ENCODE measurements at regions of chr2 and their contacts with region 1.

Region 1: GRCh38 chr2:191155608-191156071 is 4.8 kb upstream of the STAT4 start:
- H3K4me3 Mint-ChIP-seq: no peak overlapping the region
- H3K27ac Mint-ChIP-seq: no peak overlapping the region
- H3K4me1 Mint-ChIP-seq: peaks cover 23% of the 10 kb centered on the region
- H3K27me3 Mint-ChIP-seq: no peaks in the 10 kb centered on the region

Region 2: DNA sequence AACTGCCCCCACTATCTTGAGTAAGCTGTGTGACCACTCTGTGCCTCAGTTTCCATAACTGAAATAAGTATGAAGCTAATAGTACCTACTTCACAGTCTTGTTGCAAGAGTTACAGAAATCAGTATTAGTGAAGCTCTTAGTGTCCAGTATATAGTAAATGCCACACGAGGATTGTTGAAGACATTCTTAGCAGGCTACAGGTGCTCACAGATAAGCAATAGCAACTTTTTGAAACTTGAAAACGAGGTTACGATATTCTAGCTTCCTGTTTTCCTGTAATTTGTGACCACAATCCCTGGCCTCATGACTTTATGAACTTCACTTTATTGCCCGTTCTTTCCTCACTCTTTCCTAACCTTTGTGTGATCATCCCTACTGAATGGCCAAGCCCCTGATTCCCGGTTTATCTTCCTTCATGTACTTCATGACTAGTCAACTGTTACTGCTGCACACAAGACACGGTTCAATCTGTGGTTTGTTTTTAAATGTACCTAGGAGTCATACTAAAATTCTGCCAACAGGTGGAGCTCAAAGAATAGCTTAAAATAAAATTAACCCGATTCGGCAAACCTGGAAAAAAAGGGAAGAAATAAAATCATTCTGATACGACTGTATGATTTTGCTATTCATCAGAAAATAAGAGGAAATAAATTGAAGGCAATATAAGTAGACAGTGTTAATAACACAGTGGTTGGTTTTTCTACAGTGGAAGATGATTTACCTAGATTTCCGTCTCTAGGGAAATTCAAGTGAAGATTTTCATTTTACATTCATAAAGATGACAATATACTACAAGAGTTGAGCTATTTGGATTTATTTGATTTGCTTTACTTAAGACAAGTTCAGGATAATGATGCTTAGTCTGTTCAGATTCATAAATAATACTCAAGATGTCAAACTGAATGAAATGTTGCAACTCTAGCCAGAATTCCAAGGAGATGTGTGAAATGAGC is 103.5 kb before region 1 on chr2:
- intact Hi-C with region 1: loop called (anchors 2 kb)
- H3K4me3 Mint-ChIP-seq: no peak overlapping the region
- H3K27ac Mint-ChIP-seq: no peak overlapping the region
- H3K4me1 Mint-ChIP-seq: peaks cover 10% of the 10 kb centered on the region
- H3K27me3 Mint-ChIP-seq: peaks cover 7% of the 10 kb centered on the region

Region 3: GRCh38 chr2:191114403-191114886 is 41.2 kb before region 1 on chr2:
- intact Hi-C with region 1: no loop called
- H3K4me3 Mint-ChIP-seq: peak overlapping the region; percentile 30
- H3K27ac Mint-ChIP-seq: peak overlapping the region; percentile 46
- H3K4me1 Mint-ChIP-seq: peaks cover 6% of the 10 kb centered on the region
- H3K27me3 Mint-ChIP-seq: no peaks in the 10 kb centered on the region

Measured in dendritic cell treated with granulocyte-macrophage colony-stimulating factor and Interleukin-4, amounts not matched to agents 40 ng/mL and 50 ng/mL, for 4 days (primary cell).